PC-9 (cell line): ENCODE measurements at regions of chr2 and their contacts with region 1.

Region 1: DNA sequence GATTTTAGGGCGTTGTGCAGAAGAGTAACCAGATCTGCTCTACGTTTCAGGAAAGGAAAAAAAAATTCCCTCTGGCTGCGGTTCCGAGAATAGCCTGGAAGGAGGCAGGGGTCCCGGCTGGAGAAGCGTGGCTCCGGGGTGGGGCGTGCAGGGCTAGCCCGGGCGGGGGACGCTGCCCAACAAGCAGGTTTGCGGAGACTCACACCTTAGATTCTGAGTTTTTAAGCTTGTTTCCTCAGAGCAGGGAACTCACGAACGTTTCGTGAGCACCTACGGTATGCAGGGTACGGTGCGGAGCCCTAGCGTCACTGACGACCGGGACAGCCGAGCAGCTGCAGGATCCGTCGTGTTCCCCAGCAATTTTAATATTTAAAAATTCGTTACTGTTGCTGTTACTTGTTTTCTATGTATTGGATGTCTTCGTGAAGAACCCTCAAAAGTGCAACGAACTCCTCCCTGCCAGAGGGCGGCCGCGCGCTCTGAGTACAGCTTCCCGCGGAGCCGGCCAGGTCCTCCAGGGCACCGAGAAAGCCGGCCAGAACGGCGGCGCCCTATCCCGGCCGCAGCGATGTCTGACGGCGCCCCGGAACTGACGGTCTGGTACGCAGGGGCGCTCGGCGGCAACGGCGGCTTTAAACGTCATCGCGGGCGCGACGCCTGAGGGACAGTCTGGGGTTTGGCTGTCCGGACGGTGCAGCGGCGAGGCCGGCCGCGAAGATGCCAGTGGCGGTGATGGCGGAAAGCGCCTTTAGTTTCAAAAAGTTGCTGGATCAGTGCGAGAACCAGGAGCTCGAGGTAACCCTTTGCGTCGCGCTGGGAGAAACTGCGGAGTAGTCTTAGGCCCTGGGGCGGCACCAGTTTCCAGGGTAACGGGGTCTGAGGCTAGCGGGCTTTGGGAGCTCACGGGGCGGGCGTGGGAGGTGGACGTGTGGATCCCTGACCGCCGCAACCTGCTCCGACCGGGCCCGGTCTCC is at the start of gene COPS8:
- DNase-seq: peak; percentile 87 to 98
- H3K4me3 ChIP-seq: peak within 1 kb of the TSS; percentile 85
- H3K27ac ChIP-seq: peak within 1 kb of the TSS; percentile 53
- H3K4me1 ChIP-seq: peaks cover 19% of the 10 kb centered on the region
- H3K27me3 ChIP-seq: no peaks in the 10 kb centered on the region
- CTCF ChIP-seq: peak; percentile 45; the same call in 1 of the 2 replicates
- total RNA-seq, gene COPS8: 57.6 and 64.7 TPM in 2 replicates

Region 2: DNA sequence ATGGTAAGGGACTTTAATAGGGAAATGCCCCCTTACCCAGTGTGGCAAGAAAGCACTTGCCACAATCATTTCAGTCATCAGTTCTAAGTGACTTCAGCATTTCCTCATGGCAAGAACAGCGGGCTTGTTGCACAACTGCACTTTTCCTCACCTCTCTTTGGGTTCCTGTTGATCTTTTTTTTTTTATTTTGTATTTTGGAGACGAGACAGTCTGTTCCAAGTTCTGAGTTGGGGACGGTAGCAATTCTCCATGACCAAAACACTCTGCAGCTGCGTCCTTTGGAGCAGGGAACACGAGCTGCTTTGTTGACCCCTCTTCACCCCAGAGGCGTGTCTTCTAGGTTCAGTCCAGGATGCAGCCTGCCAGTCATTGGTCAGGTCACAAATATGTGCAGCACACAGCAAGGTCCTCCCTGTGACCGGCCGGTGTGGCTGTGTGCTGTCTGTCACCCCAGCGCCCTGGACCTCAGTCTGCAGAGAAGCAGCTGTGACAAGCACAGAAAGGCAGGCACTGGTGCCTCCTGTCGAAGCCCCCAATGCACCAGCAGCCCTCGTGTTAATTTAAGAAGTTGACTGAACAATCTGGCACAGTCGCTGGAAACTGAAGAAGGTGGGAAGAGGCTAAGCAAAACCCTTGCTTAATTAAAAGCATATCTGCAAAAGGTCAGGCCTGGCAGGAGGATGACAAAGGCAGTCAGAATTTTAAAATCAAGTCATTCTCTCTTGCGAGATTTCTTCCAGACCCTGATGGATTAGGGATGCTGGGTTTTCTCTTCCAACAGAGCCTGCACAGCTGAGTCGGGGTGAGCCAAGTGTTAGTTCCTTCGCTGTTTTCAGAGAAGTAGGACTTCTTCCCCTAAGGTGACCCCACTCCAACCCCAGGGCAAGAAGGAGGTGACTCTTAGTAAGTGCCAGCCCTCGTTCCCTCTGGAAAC is 96.6 kb before region 1 on chr2:
- CTCF ChIA-PET with region 1: no interaction called
- POLR2A ChIA-PET with region 1: no interaction called
- intact Hi-C with region 1: no loop called
- DNase-seq: peak; percentile 45 to 70
- H3K4me3 ChIP-seq: no peak overlapping the region
- H3K27ac ChIP-seq: peak overlapping the region; percentile 10; the same call in 1 of the 2 replicates
- H3K4me1 ChIP-seq: peaks cover 15% of the 10 kb centered on the region
- H3K27me3 ChIP-seq: peaks cover 46% of the 10 kb centered on the region
- CTCF ChIP-seq: no peak

Region 3: GRCh38 chr2:237072067-237072931 is 13.2 kb before region 1 on chr2:
- CTCF ChIA-PET with region 1: no interaction called
- POLR2A ChIA-PET with region 1: no interaction called
- intact Hi-C with region 1: loop called (anchors 1 kb)
- DNase-seq: peak; percentile 40 to 76
- H3K4me3 ChIP-seq: no peak overlapping the region
- H3K27ac ChIP-seq: no peak overlapping the region
- H3K4me1 ChIP-seq: peaks cover 22% of the 10 kb centered on the region
- H3K27me3 ChIP-seq: 0 out of 2 replicates have a peak, but pooled peaks cover 8% of the 10 kb centered on the region
- CTCF ChIP-seq: peak; percentile 100

Region 4: DNA sequence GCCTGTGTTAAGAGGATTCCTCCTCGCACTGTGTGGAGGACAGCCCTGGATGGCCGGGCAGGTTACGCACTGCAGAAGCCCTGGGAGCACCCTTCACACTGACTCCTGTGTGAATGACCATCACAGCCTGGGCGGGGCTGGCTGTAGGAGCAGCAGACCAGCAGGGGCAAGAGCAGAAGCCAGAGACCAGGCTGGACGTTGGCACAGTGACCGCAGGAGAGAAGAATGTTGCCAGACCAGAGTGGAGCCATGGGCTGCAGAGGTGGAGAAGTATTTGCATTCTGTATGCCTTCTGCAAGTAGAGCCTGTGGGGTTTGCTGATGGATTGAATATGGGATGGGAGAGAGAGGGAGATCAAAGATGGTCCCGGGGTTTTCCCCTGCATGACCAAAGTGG is 564.9 kb after region 1 on chr2:
- CTCF ChIA-PET with region 1: no interaction called
- POLR2A ChIA-PET with region 1: no interaction called
- intact Hi-C with region 1: no loop called
- DNase-seq: peak; percentile 96 to 97
- H3K4me3 ChIP-seq: no peak overlapping the region
- H3K27ac ChIP-seq: no peak overlapping the region
- H3K4me1 ChIP-seq: peaks cover 19% of the 10 kb centered on the region
- H3K27me3 ChIP-seq: no peaks in the 10 kb centered on the region
- CTCF ChIP-seq: no peak

Region 5: DNA sequence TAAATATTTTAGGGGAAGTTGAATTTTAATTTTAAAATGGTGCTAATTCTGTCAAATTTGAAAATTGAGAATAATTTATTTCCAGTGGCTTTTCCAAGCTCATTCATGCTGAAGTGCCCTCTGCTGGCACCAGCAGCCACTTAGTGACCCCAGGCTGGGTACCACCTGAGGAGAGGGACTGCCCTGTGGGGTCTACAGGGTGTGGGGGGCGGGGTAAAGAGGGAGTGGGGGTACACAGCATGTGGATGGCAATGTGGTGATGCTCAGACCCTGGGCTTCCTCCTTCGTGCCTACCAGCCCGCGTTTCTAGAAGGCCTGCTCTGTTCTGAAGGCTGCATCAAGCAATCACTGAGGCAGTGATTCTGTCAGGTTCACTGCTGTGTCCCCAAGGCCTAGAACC is 930.2 kb after region 1 on chr2:
- CTCF ChIA-PET with region 1: interaction called, 10 read pairs
- POLR2A ChIA-PET with region 1: no interaction called
- intact Hi-C with region 1: no loop called
- DNase-seq: no peak
- H3K4me3 ChIP-seq: no peak overlapping the region
- H3K27ac ChIP-seq: no peak overlapping the region
- H3K4me1 ChIP-seq: no peaks in the 10 kb centered on the region
- H3K27me3 ChIP-seq: no peaks in the 10 kb centered on the region
- CTCF ChIP-seq: peak; percentile 52